Left cardiac atrium (tissue), 4 donors: ENCODE measurements at regions of chr2 and their contacts with region 1.

Region 1: DNA sequence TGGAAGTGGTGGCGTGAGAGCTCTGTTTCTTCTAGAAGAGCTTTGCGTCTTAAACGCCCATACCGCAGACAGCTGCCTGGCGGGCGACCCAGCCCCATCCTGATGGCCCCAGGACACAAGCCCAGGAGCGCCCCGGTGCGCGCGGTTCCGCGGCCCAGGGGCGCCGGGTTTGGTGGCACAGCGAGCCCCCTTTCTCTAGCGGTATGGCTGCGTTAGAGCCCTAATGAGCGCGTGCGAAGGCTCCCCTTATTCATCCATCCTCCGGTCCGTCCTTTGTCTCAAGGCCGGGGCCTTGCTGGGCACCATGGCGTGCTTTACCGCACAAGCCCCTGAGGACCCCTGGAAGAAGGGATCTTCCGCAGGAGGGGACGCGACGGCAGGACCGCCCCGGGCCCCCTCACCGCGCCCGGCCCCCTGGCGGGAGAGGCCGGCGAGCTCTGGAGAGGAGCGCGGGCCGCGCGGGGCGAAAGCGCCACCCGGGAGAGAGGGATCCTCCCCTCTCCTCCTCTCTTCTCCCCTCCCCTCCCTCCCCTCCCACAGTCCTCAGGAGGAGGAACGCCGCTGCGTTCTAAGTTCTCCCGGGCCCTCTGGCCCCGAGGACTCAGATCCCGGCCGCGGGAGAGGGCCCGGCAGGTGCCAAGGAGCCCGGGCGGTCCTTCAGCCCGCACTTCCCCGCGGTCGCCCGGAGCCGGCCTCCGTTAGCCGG is 626 bp upstream of the SLC1A4 start:
- DNase-seq: peak; percentile 63
- ATAC-seq: peak; percentile 80 to 86

Region 2: GRCh38 chr2:64750817-64751285 is 237.7 kb before region 1 on chr2:
- intact Hi-C with region 1: no loop called
- DNase-seq: no peak
- ATAC-seq: peak; percentile 89 to 93

Region 3: GRCh38 chr2:65040400-65041261 is 52.1 kb after region 1 on chr2:
- intact Hi-C with region 1: loop called in 1 of 2 experiments (anchors 5 kb)
- DNase-seq: peak; percentile 86
- ATAC-seq: peak; percentile 95 to 97

Region 4: DNA sequence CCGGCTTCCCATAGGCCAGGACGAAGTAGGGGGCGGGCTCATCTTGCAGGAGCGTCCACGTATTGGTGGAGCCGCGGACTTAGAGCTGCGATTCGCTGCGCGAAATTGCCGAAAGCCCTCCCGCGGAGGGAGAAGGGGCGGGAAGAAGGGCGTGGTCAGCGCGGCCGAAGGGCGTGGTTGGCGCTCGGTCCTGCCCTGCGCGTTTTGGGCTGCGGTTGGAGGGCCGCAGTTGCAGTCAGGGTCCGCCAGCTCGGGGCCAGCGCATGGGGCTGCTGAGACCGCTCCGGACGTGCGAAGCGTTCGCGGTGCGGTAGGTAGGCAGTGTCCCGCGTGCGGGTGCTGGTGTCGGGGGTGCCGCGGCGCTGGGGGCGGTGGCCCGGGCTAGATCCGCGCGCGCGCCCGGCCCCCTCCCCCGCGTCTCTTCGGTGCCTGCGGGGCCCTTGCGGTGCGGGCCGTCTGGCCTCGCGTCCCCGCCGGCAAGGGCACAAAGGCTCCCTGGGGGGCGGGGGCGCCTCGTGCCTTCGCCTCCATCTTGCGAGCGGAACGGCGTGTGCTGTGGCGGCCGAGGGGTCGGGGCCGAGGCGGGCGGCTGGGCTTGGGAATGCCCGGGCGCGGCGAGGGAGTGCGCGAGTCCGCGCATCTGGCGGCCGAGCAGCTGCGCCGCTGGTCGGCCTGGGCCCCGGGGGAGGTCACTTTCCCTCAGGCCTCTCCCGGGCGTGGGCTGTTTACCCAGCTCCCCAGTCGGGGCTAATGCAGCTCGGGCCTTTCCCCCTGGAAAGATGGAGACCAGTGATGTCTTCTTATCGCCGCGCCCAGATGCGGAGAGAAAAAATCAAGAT is 67.9 kb after region 1 on chr2 and contains the start of gene CEP68:
- intact Hi-C with region 1: no loop called
- DNase-seq: peak; percentile 98
- ATAC-seq: peak; percentile 98 to 99
- total RNA-seq, gene CEP68: 12.6 to 15.4 TPM